Aorta (tissue), 5 donors: ENCODE measurements at regions of chr14 and their contacts with region 1.

Region 1: GRCh38 chr14:68685419-68686204 is 107.3 kb downstream of the ZFP36L1 start:
- DNase-seq: no peak
- ATAC-seq: no peak
- H3K4me3 ChIP-seq: no peak overlapping the region
- H3K27ac ChIP-seq: no peak overlapping the region
- H3K4me1 ChIP-seq: peaks cover 2 to 11% of the 10 kb centered on the region in 2 donors
- H3K27me3 ChIP-seq: no peaks in the 10 kb centered on the region

Region 2: DNA sequence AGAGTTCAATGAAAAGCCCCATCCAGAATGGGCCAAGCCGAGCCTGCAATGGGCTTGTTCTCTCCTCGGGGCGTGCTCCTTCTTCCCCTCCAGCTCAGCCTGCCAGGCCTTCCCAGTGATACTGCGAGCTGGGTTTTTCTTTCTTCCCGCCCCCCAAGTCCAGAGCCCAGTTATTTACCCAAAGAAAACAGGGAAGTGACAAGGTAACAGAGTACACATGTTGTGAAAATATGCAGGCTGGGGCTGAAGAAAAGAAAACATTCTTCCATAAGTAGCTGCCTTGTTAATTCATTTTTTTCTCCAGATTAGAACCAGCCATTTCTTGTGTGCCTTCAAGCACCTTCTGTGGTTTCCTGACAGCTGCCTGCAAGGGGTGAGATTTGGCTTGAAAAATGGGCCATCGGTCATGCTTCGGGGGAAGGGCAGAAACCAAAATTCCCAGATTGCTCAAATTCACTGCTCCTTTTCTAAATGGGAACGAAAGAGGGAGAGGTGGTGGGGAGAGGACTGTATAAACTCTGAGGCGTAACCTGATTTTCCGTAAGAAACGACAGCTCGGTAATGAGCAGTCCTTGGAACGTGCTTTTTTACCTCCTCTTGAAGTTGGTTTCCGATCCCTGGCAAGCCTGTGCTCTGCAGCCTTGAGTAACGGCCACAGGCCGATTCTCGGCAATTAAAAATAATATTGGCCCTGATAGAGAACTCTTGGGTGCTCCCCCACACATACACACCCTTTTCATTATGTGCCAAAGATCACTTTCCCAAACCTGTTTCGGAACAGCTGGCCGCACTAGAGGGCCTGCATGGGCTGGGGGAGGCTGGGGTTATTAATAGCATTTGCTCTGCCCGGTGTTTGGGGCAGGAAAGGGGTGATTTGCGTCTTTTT is 122.1 kb before region 1 on chr14:
- intact Hi-C with region 1: loop called in 1 of 2 experiments (anchors 5 kb)
- DNase-seq: no peak
- ATAC-seq: peak; percentile 64
- H3K4me3 ChIP-seq: no peak overlapping the region
- H3K27ac ChIP-seq: peak overlapping the region; percentile 91 to 99
- H3K4me1 ChIP-seq: peaks cover 0 to 6% of the 10 kb centered on the region in 2 donors
- H3K27me3 ChIP-seq: no peaks in the 10 kb centered on the region

Region 3: DNA sequence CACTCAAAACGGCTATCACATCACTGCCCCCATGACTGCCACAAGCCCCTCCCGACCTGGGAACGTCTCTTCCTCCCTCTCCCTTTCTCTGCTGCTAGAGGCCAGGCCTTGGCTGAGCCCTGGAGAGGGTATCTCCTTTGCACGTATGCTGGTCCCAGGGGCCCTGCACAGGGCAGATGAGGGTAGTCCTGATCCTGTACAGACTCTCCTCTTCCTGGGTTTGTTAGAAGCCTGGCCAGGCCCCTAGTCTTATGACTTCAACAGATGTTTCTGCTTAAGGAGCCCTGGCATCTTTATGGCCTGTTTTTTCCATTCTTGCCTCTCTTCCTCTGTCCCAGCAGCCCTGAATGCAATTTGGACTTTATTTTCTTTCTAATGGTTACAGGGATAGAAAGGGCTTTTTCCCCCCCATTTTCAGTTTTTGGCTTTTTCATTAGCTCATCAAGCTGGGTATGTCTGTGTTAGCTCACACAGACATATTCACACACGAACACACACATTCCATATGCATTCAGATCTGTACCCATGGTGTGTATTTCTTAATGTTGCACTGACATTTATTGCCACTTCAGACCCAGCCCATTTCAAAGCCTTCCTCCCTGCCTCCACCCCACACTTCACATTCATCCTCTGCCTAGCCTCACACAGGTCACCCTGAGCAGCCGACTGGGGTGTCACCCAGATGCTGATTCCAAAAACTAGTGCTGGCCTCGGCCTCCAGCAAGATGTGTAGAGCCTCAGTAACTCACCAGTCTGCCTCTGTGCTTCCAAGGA is 96.0 kb before region 1 on chr14:
- intact Hi-C with region 1: no loop called
- DNase-seq: no peak
- ATAC-seq: peak; percentile 73
- H3K4me3 ChIP-seq: no peak overlapping the region
- H3K27ac ChIP-seq: no peak overlapping the region
- H3K4me1 ChIP-seq: no peaks in the 10 kb centered on the region
- H3K27me3 ChIP-seq: no peaks in the 10 kb centered on the region

Region 4: GRCh38 chr14:68734231-68734775 is 48.7 kb after region 1 on chr14:
- intact Hi-C with region 1: no loop called
- DNase-seq: no peak
- ATAC-seq: no peak
- H3K4me3 ChIP-seq: no peak overlapping the region
- H3K27ac ChIP-seq: no peak overlapping the region
- H3K4me1 ChIP-seq: peaks cover 0 to 3% of the 10 kb centered on the region in 2 donors
- H3K27me3 ChIP-seq: no peaks in the 10 kb centered on the region

Region 5: GRCh38 chr14:68780358-68781160 is 94.9 kb after region 1 on chr14:
- intact Hi-C with region 1: loop called (anchors 5 kb)
- DNase-seq: peak in 1 of 2 donors; percentile 86
- ATAC-seq: peak; percentile 67
- H3K4me3 ChIP-seq: no peak overlapping the region
- H3K27ac ChIP-seq: peak overlapping the region; percentile 0 to 22
- H3K4me1 ChIP-seq: peaks cover 0 to 2% of the 10 kb centered on the region in 2 donors
- H3K27me3 ChIP-seq: no peaks in the 10 kb centered on the region

Region 6: DNA sequence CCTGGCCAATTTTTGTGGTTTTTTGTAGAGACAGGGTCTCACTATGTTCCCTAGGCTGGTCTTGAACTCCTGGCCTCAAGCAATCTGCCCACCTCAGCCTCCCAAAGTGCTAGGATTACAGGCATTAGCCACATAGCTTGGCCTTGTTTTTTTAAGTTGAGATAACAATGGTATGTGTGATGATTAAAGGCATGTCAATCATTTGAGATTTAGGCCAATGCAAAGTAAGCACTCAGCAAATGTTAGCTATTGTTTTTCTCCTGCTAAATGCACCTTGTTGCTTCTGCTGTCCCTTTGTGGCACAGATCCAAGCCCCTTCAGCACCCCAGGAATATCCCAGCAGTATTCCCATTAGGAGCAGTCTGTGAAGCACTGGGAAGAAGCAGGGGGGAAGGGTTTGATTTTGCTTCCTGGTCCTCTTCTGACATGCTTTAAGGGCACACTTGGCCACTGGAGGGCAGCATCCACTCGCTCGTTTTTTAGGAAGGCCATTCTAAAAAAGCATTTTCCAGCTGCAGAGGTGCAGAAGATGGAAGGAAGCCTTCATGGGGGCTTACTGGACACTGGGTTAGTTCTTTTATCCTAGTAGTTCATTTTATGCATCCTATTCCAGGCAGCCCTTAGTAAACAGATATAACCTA is 177.5 kb after region 1 on chr14:
- intact Hi-C with region 1: no loop called
- DNase-seq: peak; percentile 87 to 90
- ATAC-seq: peak; percentile 73
- H3K4me3 ChIP-seq: no peak overlapping the region
- H3K27ac ChIP-seq: no peak overlapping the region
- H3K4me1 ChIP-seq: no peaks in the 10 kb centered on the region
- H3K27me3 ChIP-seq: no peaks in the 10 kb centered on the region